ENCODE measurements at regions of chr7 and their contacts with region 1.

Region 1: GRCh38 chr7:33109005-33109757 is at the start of gene RP9:
- DNase-seq: peak; percentile 63
- H3K4me3 Mint-ChIP-seq: peak within 1 kb of the TSS; percentile 80
- H3K27ac Mint-ChIP-seq: peak within 1 kb of the TSS; percentile 80
- H3K4me1 Mint-ChIP-seq: peaks cover 4% of the 10 kb centered on the region
- H3K27me3 Mint-ChIP-seq: peaks cover 9% of the 10 kb centered on the region
- CTCF ChIP-seq: peak; percentile 67
- total RNA-seq, gene RP9: 29.1 and 32.1 TPM in 2 replicates

Region 2: DNA sequence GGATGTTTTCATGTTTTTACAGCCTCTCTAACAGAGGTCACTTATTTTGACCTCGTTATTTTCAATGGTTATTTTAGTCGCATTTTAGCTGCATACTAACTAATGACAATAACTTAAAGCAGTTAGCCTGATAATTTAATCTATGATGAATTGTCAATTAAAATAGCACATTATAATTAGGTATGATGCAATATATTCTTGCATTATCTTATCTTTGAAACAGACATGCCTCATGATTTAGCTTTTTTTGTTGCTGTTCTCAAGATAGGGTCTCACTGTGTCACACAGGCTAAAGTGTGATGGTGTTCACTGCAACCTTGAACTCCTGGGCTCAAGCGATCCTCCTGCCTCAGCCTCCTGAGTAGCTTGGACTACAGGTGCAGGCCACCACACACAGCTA is 344.0 kb before region 1 on chr7:
- CTCF ChIA-PET with region 1: interaction called, 21 read pairs
- POLR2A ChIA-PET with region 1: no interaction called
- intact Hi-C with region 1: loop called (anchors 1 kb)
- DNase-seq: no peak
- H3K4me3 Mint-ChIP-seq: no peak overlapping the region
- H3K27ac Mint-ChIP-seq: no peak overlapping the region
- H3K4me1 Mint-ChIP-seq: no peaks in the 10 kb centered on the region
- H3K27me3 Mint-ChIP-seq: no peaks in the 10 kb centered on the region
- CTCF ChIP-seq: no peak

Region 3: GRCh38 chr7:32879460-32879859 is 229.7 kb before region 1 on chr7:
- CTCF ChIA-PET with region 1: interaction called, 11 read pairs
- POLR2A ChIA-PET with region 1: no interaction called
- intact Hi-C with region 1: no loop called
- DNase-seq: no peak
- H3K4me3 Mint-ChIP-seq: no peak overlapping the region
- H3K27ac Mint-ChIP-seq: peak overlapping the region; percentile 40
- H3K4me1 Mint-ChIP-seq: peaks cover 24% of the 10 kb centered on the region
- H3K27me3 Mint-ChIP-seq: no peaks in the 10 kb centered on the region
- CTCF ChIP-seq: no peak

Region 4: DNA sequence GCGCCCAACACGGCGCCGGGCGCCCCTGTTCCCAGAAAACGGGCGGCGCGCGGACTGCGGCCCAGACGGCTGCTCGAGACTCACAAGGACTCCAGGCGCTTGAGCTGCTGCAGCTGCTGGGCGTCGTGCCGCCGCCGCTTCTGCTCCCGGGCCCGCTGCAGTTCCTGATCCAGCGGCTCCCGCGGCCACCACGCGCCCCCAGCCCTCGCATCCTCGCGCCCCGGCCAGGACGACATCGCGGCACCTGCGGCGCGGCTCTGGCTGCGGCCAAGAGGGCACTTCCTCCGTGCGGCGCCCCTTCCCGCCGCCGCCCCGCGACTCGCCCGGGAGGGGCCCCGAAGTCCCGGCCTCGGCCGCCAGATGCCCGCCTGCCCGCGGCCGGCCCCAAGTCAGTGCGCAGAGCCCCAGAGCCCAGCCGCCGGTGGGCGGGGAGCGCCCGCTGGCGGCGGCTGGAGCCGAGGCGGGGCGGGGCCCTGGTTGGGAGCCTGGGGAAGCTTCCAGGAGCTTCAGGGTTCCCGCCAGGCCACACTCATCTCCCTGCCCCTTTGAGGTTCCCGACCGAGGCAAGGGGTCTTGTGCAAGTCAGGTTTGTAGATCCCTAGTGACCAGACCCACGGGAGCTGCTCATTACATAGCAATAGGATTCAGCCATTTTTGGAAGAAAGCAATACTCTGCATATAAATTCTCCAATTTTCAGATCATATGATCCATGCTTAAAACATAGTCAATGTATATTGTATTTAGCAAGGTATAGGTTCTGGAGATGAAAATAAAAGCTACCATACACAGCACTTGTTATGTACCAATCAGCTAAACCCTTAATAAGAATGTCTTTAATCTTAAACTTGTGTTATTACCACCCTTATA is 166.2 kb before region 1 on chr7:
- CTCF ChIA-PET with region 1: interaction called, 8 read pairs
- POLR2A ChIA-PET with region 1: interaction called, 8 read pairs
- intact Hi-C with region 1: loop called (anchors 1 kb)
- DNase-seq: peak; percentile 80
- H3K4me3 Mint-ChIP-seq: peak overlapping the region; percentile 85
- H3K27ac Mint-ChIP-seq: peak overlapping the region; percentile 83
- H3K4me1 Mint-ChIP-seq: peaks cover 22% of the 10 kb centered on the region
- H3K27me3 Mint-ChIP-seq: no peaks in the 10 kb centered on the region
- CTCF ChIP-seq: peak; percentile 28

Region 5: GRCh38 chr7:33050535-33051318 is 58.5 kb before region 1 on chr7:
- CTCF ChIA-PET with region 1: interaction called, 12 read pairs
- POLR2A ChIA-PET with region 1: interaction called, 4 read pairs
- intact Hi-C with region 1: no loop called
- DNase-seq: peak; percentile 60
- H3K4me3 Mint-ChIP-seq: no peak overlapping the region
- H3K27ac Mint-ChIP-seq: no peak overlapping the region
- H3K4me1 Mint-ChIP-seq: peaks cover 7% of the 10 kb centered on the region
- H3K27me3 Mint-ChIP-seq: no peaks in the 10 kb centered on the region
- CTCF ChIP-seq: peak; percentile 58

Region 6: GRCh38 chr7:33072471-33072870 is 36.7 kb before region 1 on chr7:
- CTCF ChIA-PET with region 1: interaction called, 25 read pairs
- POLR2A ChIA-PET with region 1: interaction called, 5 read pairs
- intact Hi-C with region 1: no loop called
- DNase-seq: peak; percentile 28
- H3K4me3 Mint-ChIP-seq: no peak overlapping the region
- H3K27ac Mint-ChIP-seq: no peak overlapping the region
- H3K4me1 Mint-ChIP-seq: peaks cover 12% of the 10 kb centered on the region
- H3K27me3 Mint-ChIP-seq: peaks cover 25% of the 10 kb centered on the region
- CTCF ChIP-seq: no peak

Region 7: GRCh38 chr7:34875481-34875880 is 1766.3 kb after region 1 on chr7:
- CTCF ChIA-PET with region 1: no interaction called
- POLR2A ChIA-PET with region 1: no interaction called
- intact Hi-C with region 1: no loop called
- DNase-seq: no peak
- H3K4me3 Mint-ChIP-seq: no peak overlapping the region
- H3K27ac Mint-ChIP-seq: no peak overlapping the region
- H3K4me1 Mint-ChIP-seq: no peaks in the 10 kb centered on the region
- H3K27me3 Mint-ChIP-seq: no peaks in the 10 kb centered on the region
- CTCF ChIP-seq: no peak